PC-9 (cell line): ENCODE measurements at regions of chr9 and their contacts with region 1.

Region 1: DNA sequence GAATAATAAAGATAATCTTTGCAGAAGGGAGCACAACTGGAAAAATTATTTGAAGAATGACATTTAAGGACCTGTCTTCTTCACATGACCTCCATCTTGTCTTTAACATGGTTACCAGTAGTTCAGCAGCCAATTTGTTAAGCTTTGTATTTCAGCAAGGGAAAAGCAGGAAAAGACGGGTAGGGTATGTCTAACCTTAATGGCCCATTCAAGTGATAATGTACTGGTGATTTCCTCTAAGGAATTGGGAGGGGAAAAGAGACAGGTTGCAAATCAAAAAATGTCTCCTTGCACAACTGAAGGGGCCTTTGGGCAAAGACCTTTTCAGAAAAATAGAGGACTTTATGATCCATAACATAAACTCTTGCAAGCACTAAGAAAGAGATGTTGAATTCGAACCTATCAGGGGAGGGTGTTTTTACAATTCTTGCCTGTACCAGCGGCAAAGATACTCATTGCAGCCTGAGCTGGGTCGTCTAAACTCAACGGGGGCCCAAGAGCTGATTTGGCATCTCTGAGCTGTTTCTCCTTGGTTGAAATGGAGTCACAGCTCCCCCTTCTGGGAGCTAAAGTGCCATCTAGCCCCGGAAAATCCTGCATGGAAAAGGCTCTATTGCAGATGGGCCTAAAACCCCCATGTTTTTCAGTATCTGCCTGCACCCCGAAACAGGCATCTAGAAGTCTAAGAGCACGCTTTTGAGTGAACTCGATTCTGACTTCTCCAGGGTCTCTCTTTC is 3.8 kb downstream of the BRINP1 start:
- DNase-seq: peak in 1 of 2 experiments; percentile 6
- H3K4me3 ChIP-seq: no peak overlapping the region
- H3K27ac ChIP-seq: no peak overlapping the region
- H3K4me1 ChIP-seq: no peaks in the 10 kb centered on the region
- H3K27me3 ChIP-seq: no peaks in the 10 kb centered on the region
- CTCF ChIP-seq: peak; percentile 57

Region 2: GRCh38 chr9:117644133-117644931 is 1721.1 kb before region 1 on chr9:
- CTCF ChIA-PET with region 1: no interaction called
- POLR2A ChIA-PET with region 1: no interaction called
- intact Hi-C with region 1: loop called (anchors 5 kb)
- DNase-seq: peak; percentile 52 to 57
- H3K4me3 ChIP-seq: no peak overlapping the region; the same call in 1 of the 2 replicates
- H3K27ac ChIP-seq: no peak overlapping the region
- H3K4me1 ChIP-seq: no peaks in the 10 kb centered on the region
- H3K27me3 ChIP-seq: peaks cover 28% of the 10 kb centered on the region
- CTCF ChIP-seq: peak; percentile 96

Region 3: DNA sequence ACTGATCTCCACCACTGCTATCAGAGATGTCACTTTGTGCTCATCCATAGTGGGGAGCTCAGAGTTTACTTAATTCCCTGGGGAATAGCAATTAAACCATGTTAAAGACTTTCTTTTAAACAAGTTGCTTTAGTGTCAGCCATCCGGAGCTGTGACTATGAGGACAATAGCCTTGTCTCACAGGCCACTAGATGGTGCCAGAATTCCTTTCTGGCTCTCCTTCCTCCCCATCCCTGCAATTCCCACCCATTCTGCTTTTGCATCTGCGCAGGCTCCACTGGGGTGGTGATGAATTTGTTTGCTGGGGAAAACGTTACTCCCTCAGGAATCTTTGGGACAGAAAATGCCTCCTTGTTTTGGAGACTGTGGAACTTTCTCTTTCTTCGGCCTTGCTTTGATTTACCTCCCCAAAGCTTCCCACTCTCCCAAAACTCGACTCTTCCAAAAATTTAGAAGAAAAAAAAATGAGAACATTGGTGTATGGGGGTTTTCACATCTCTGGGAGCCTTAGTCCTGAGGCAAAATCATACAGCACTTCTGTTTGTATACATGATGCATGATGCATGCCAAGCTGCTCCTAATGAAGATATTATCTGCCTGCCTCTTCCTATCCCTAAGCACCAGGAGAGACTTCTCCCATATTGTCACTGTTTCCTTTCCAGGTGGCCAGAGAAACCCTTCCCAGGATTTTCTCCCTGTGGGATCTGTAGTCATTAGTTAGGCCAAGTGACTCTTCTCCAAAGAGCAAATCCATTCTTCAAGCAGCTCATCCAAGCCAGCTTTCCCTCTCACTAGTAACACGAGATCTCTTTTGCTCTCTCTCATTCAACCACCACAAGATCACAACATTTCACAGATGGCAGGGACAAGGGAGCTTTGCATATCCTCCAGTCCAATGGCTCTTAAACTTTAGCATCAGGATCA is 1195.2 kb before region 1 on chr9:
- CTCF ChIA-PET with region 1: no interaction called
- POLR2A ChIA-PET with region 1: no interaction called
- intact Hi-C with region 1: loop called (anchors 2 kb)
- DNase-seq: peak in 1 of 2 experiments; percentile 39
- H3K4me3 ChIP-seq: no peak overlapping the region
- H3K27ac ChIP-seq: no peak overlapping the region
- H3K4me1 ChIP-seq: no peaks in the 10 kb centered on the region
- H3K27me3 ChIP-seq: no peaks in the 10 kb centered on the region
- CTCF ChIP-seq: peak; percentile 71

Region 4: GRCh38 chr9:118522093-118523028 is 843.1 kb before region 1 on chr9:
- CTCF ChIA-PET with region 1: no interaction called
- POLR2A ChIA-PET with region 1: no interaction called
- intact Hi-C with region 1: loop called (anchors 10 kb)
- DNase-seq: peak in 1 of 2 experiments; percentile 36
- H3K4me3 ChIP-seq: no peak overlapping the region
- H3K27ac ChIP-seq: no peak overlapping the region
- H3K4me1 ChIP-seq: no peaks in the 10 kb centered on the region
- H3K27me3 ChIP-seq: no peaks in the 10 kb centered on the region
- CTCF ChIP-seq: peak; percentile 63

Region 5: DNA sequence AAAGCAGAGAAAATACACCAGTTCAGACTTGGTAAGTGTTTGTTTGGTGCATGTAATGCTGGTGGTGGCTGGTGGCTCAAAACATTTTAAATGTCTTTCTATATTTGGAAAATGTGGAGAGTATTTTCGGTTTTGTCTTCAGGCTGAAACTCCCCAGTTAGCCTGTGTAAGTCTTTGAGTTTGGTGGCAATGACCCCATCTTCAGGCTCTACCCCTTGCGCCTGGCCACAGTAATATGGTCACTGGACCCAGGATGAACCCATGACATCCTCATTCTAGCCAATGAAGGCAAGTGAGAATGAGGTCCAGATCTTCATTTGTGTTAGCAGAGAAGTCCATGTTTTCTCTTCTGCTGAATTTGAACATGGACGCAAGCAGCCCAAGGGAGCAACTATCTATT is 418.8 kb before region 1 on chr9:
- CTCF ChIA-PET with region 1: no interaction called
- POLR2A ChIA-PET with region 1: no interaction called
- intact Hi-C with region 1: no loop called
- DNase-seq: no peak
- H3K4me3 ChIP-seq: no peak overlapping the region
- H3K27ac ChIP-seq: no peak overlapping the region
- H3K4me1 ChIP-seq: no peaks in the 10 kb centered on the region
- H3K27me3 ChIP-seq: no peaks in the 10 kb centered on the region
- CTCF ChIP-seq: no peak